Activated CD4-positive, alpha-beta memory T cell treated with anti-CD3 and anti-CD28 coated beads, Interleukin-2, amount 10 ng/mL, durations not matched to agents 7 days and 5 days (primary cell): ENCODE measurements at regions of chr19 and their contacts with region 1.

Region 1: GRCh38 chr19:45770192-45771101 is 1.4 kb upstream of the SIX5 start:
- DNase-seq: peak; percentile 91
- H3K4me3 Mint-ChIP-seq: peak overlapping the region; percentile 79
- H3K27ac Mint-ChIP-seq: peak overlapping the region; percentile 68
- H3K4me1 Mint-ChIP-seq: peaks cover 18% of the 10 kb centered on the region
- H3K27me3 Mint-ChIP-seq: peaks cover 15% of the 10 kb centered on the region

Region 2: DNA sequence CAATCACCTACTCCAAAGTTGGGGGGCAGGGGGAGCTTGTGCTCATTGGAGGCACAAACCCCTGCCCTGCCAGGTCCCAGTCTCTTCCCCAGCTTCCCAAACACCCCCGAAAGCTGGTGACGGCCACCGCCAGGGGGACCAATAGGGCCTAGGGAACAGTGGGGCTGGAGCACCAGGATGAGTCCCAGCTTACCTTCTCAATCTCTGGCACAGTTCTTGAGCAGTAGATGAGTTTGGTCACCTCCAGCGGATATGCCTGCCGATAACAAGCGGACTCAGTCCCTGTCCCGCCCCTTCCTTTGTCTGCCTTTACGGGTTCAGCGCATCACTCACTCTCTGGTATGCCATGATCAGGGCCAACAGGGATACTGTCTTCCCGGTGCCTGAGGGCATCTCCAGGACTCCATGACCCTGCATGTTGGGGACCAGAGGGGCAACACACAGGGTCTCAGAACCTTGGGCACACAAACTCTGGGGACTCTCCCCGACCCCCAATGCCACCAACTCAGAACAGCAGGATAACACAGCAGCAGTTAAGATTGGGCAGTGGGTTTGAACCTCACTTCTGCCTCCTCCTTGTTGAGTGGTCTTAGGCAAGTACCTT is 401.6 kb before region 1 on chr19:
- CTCF ChIA-PET with region 1: no interaction called
- POLR2A ChIA-PET with region 1: no interaction called
- DNase-seq: no peak
- H3K4me3 Mint-ChIP-seq: peak overlapping the region; percentile 44
- H3K27ac Mint-ChIP-seq: no peak overlapping the region
- H3K4me1 Mint-ChIP-seq: peaks cover 18% of the 10 kb centered on the region
- H3K27me3 Mint-ChIP-seq: no peaks in the 10 kb centered on the region

Region 3: DNA sequence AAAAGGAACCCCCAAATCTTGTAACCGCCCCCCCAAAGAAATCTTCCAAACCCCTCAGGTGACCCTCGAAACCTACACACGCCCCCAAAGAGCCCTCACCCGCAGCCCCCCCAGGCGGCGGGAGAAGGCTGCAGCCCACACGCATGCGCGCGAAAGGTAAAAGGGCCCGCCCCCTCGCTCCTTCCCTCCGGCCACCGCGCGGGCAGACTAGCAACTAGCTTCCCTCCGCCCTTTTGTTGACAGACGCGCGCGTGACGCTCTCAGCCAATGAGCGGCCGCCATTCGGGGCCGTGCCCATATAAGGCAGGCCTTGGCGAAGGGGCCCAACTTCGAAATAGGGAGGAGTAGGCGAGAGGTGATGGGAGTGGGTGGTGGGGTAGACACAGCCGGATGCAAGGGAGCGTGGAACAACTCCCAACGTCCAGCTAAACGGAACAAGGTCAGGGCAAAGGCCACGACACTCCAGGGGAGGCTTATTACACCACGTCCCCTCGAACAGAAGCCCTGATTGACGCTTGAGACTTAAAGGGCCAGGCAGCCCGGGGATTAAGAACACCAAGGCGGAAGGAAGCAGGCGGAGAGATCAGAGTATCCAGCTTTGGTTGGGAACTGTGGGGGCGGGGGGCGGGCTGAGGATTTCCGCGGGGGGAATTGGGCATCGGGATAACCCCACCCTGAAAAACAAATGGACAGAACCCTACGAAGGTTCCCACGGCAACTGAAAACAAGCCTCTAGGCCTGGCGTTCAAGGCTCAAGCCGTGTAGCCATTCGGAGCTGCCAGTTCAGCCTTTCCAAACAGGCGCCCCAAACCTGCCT is 53.1 kb before region 1 on chr19:
- CTCF ChIA-PET with region 1: interaction called, 27 read pairs
- POLR2A ChIA-PET with region 1: interaction called, 12 read pairs
- DNase-seq: peak; percentile 99
- H3K4me3 Mint-ChIP-seq: peak overlapping the region; percentile 96
- H3K27ac Mint-ChIP-seq: peak overlapping the region; percentile 88
- H3K4me1 Mint-ChIP-seq: peaks cover 47% of the 10 kb centered on the region
- H3K27me3 Mint-ChIP-seq: no peaks in the 10 kb centered on the region

Region 4: GRCh38 chr19:45792470-45793177 is 22.2 kb after region 1 on chr19 and contains the start of gene DMWD:
- CTCF ChIA-PET with region 1: interaction called, 212 read pairs
- POLR2A ChIA-PET with region 1: interaction called, 32 read pairs
- DNase-seq: peak; percentile 100
- H3K4me3 Mint-ChIP-seq: peak within 1 kb of the TSS; percentile 96
- H3K27ac Mint-ChIP-seq: peak within 1 kb of the TSS; percentile 78
- H3K4me1 Mint-ChIP-seq: peaks cover 37% of the 10 kb centered on the region
- H3K27me3 Mint-ChIP-seq: peaks cover 53% of the 10 kb centered on the region
- total RNA-seq, gene DMWD: 63.1 to 65.4 TPM

Region 5: GRCh38 chr19:45804140-45804958 is 33.9 kb after region 1 on chr19:
- CTCF ChIA-PET with region 1: interaction called, 212 read pairs
- POLR2A ChIA-PET with region 1: interaction called, 21 read pairs
- DNase-seq: no peak
- H3K4me3 Mint-ChIP-seq: no peak overlapping the region
- H3K27ac Mint-ChIP-seq: no peak overlapping the region
- H3K4me1 Mint-ChIP-seq: peaks cover 2% of the 10 kb centered on the region
- H3K27me3 Mint-ChIP-seq: peaks cover 17% of the 10 kb centered on the region

Region 6: DNA sequence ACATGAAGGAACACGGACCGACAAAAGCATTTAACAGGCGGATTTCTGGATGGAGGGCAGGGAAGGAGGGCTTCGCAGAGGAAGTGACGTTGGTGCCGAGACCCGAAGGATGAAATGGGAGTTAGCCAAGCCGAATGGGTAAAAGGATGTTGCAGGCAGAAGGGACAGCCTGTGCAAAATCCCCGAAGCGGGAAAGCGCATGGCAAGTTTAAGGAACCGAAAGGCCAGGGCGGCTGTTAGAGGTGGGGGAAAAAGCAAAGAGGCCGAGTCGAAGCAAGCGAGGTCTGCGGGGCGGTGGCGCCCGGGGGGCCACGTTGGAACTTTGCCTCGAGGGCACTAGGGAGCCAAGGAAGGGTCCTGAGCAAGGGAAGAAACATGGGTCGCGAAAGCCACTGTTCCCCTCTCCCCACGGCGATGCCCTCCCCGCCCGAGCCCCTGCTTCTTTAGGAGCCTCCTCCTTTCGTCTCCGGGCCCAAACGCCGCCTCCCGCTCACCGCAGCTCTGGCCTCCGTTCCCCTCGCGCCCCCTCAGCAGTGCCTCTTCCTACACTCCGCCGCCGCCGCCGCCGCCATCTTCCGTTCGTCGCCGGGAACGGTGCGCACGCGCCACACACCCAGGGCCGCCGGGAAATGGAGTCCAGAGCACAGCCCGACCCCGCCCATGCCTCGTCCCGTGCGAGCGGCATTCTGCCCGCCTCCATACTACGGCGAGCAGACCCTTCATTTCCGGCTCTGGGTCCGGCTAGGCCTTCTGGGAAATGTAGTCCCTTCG is 92.3 kb after region 1 on chr19 and contains the start of gene SYMPK:
- CTCF ChIA-PET with region 1: interaction called, 30 read pairs
- POLR2A ChIA-PET with region 1: interaction called, 9 read pairs
- DNase-seq: peak; percentile 99
- H3K4me3 Mint-ChIP-seq: peak within 1 kb of the TSS; percentile 92
- H3K27ac Mint-ChIP-seq: peak within 1 kb of the TSS; percentile 96
- H3K4me1 Mint-ChIP-seq: peaks cover 36% of the 10 kb centered on the region
- H3K27me3 Mint-ChIP-seq: peaks cover 29% of the 10 kb centered on the region
- total RNA-seq, gene SYMPK: 88.3 to 89.2 TPM

Region 7: DNA sequence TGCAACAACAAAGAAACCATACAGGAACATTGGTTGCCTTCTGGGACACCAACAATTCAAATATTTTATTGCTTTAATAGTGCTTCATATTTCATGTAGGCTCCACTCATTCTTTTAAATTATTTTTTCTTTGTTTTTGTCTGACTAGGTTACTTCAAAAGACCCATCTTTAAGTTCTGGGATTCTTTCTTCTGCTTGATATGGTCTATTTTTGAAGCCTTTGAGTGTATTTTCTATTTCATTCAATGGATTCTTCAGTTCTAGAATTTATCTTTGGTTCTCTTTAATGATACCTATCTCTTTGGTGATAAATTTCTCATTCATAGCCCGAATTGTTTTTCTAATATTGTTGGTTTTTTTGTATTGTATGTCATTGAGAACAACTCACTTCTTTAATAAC is 315.4 kb after region 1 on chr19:
- CTCF ChIA-PET with region 1: no interaction called
- POLR2A ChIA-PET with region 1: no interaction called
- DNase-seq: no peak
- H3K4me3 Mint-ChIP-seq: no peak overlapping the region
- H3K27ac Mint-ChIP-seq: no peak overlapping the region
- H3K4me1 Mint-ChIP-seq: no peaks in the 10 kb centered on the region
- H3K27me3 Mint-ChIP-seq: peaks cover 48% of the 10 kb centered on the region